CD8-positive, alpha-beta T cell (primary cell): ENCODE measurements at regions of chr16 and their contacts with region 1.

Region 1: GRCh38 chr16:71669932-71670536 is 44.0 kb downstream of the MARVELD3 start:
- DNase-seq: no peak
- ATAC-seq: no peak
- H3K4me3 ChIP-seq: no peak overlapping the region
- H3K4me3 Mint-ChIP-seq: no peak overlapping the region
- H3K27ac ChIP-seq: no peak overlapping the region
- H3K27ac Mint-ChIP-seq: no peak overlapping the region
- H3K4me1 ChIP-seq: no peaks in the 10 kb centered on the region
- H3K4me1 Mint-ChIP-seq: no peaks in the 10 kb centered on the region
- H3K27me3 ChIP-seq: no peaks in the 10 kb centered on the region
- H3K27me3 Mint-ChIP-seq: no peaks in the 10 kb centered on the region
- CTCF ChIP-seq: no peak

Region 2: GRCh38 chr16:71746442-71747046 is 76.5 kb after region 1 on chr16:
- CTCF ChIA-PET with region 1: no interaction called
- POLR2A ChIA-PET with region 1: no interaction called
- intact Hi-C with region 1: loop called in 1 of 2 experiments (anchors 10 kb)
- DNase-seq: peak in 4 of 9 experiments; percentile 9 to 70 (median 40)
- ATAC-seq: peak; percentile 65
- H3K4me3 ChIP-seq: no peak overlapping the region
- H3K4me3 Mint-ChIP-seq: no peak overlapping the region
- H3K27ac ChIP-seq: no peak overlapping the region
- H3K27ac Mint-ChIP-seq: no peak overlapping the region
- H3K4me1 ChIP-seq: no peaks in the 10 kb centered on the region
- H3K4me1 Mint-ChIP-seq: peaks cover 3% of the 10 kb centered on the region
- H3K27me3 ChIP-seq: no peaks in the 10 kb centered on the region
- H3K27me3 Mint-ChIP-seq: no peaks in the 10 kb centered on the region
- CTCF ChIP-seq: peak; percentile 75